ENCODE measurements at regions of chr11 and their contacts with region 1.

Region 1: DNA sequence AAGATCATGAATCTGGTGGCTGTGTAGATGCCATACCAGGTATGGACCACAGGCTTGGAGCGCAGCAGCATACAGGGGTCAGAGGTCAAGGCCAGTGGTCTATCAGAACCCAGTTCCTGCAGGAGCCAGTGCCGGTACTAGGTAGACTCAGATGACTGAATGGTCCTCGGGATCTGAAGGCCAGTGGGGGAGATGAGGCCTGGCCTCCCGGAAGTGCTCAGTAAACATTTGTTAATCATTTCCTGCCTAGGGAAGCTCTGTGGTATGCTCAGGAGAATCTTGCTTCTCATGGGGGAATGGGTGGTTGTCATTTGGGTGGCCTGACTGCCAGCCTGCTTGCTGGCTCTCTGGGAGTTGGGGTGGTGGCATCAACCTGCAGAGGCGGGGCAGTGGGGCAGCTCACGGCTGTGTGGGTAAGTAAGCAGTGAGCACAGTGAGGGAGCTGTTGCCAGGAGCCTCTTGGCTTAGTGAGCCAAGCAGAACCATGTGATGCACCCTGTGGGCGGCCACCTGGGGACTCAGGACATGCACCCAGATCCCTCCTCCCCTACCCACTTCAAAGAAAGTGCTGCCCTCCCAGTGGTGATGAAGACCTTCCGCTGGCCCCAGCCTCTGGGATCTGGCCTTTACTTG is 33.0 kb downstream of the PTPRJ start:
- DNase-seq: peak; percentile 54 to 76
- ATAC-seq: peak; percentile 11 to 34 (median 23)
- H3K4me3 ChIP-seq: no peak overlapping the region
- H3K4me3 Mint-ChIP-seq: peak overlapping the region; percentile 71
- H3K27ac ChIP-seq: peak overlapping the region; percentile 98
- H3K27ac Mint-ChIP-seq: peak overlapping the region; percentile 99
- H3K4me1 ChIP-seq: peaks cover 99% of the 10 kb centered on the region
- H3K4me1 Mint-ChIP-seq: peaks cover 69 to 83% of the 10 kb centered on the region in 2 donors
- H3K27me3 ChIP-seq: no peaks in the 10 kb centered on the region
- H3K27me3 Mint-ChIP-seq: no peaks in the 10 kb centered on the region
- CTCF ChIP-seq: no peak

Region 2: GRCh38 chr11:47932544-47932943 is 80.8 kb before region 1 on chr11:
- intact Hi-C with region 1: loop called (anchors 2 kb)
- DNase-seq: no peak
- ATAC-seq: no peak
- H3K4me3 ChIP-seq: no peak overlapping the region
- H3K4me3 Mint-ChIP-seq: no peak overlapping the region
- H3K27ac ChIP-seq: no peak overlapping the region
- H3K27ac Mint-ChIP-seq: no peak overlapping the region
- H3K4me1 ChIP-seq: peaks cover 7% of the 10 kb centered on the region
- H3K4me1 Mint-ChIP-seq: peaks cover 5% of the 10 kb centered on the region in 2 donors
- H3K27me3 ChIP-seq: no peaks in the 10 kb centered on the region
- H3K27me3 Mint-ChIP-seq: peaks cover 0 to 6% of the 10 kb centered on the region in 2 donors
- CTCF ChIP-seq: no peak

Region 3: DNA sequence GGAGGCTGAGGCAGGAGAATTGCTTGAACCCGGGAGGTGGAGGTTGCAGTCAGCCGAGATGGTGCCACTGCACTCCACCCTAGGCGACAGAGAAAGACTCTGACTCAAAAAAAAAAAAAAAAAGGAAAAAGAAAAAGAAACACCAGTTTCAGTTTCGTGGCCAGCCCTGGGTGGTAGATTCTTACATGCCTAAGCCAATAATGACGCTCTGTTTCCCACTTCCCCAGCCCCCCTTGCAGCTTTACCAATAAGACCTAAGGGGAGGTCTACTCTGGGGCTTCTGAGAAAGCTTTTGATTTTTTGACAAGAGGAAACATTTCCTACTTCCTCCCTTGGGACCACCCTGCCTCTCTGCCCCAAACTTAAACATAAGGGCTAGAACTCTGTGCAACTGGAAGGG is 63.0 kb before region 1 on chr11:
- intact Hi-C with region 1: loop called (anchors 5 kb)
- DNase-seq: peak; percentile 30 to 82
- ATAC-seq: peak; percentile 90 to 95 (median 93)
- H3K4me3 ChIP-seq: no peak overlapping the region
- H3K4me3 Mint-ChIP-seq: peak overlapping the region; percentile 47
- H3K27ac ChIP-seq: peak overlapping the region; percentile 62
- H3K27ac Mint-ChIP-seq: peak overlapping the region; percentile 65 to 79
- H3K4me1 ChIP-seq: peaks cover 25% of the 10 kb centered on the region
- H3K4me1 Mint-ChIP-seq: peaks cover 7 to 20% of the 10 kb centered on the region in 2 donors
- H3K27me3 ChIP-seq: no peaks in the 10 kb centered on the region
- H3K27me3 Mint-ChIP-seq: no peaks in the 10 kb centered on the region
- CTCF ChIP-seq: no peak

Region 4: DNA sequence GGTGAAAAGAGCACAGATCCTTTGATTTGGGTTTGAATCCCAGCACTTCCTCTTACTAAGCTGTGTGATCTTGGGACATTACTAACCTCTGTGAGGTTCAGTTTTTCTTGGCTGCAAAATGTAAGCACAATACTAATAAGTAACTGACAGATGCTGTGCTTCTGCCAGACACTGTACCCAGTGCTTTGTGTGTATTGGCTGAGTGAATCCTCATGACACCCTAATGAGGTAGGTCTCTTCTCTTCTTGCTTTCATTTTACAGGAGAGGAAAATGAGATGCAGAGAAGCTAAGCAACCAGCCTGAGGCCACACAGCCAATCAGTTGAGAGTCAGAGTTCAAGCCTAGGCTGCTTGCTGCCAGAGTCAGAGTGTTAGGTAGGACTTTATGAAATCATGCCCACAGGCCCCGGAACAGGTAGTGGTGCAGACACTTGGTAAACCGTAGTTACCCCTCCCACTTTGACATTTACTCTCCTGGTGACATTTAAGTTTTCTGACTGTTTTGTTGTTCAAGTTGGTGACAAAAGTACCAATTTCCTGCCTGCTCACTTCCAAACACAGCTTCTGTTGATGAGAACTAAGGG is 11.9 kb before region 1 on chr11:
- intact Hi-C with region 1: loop called (anchors 1 kb)
- DNase-seq: peak; percentile 76 to 96
- ATAC-seq: peak; percentile 85 to 96 (median 93)
- H3K4me3 ChIP-seq: no peak overlapping the region
- H3K4me3 Mint-ChIP-seq: peak overlapping the region; percentile 88
- H3K27ac ChIP-seq: peak overlapping the region; percentile 90
- H3K27ac Mint-ChIP-seq: peak overlapping the region; percentile 95 to 97
- H3K4me1 ChIP-seq: peaks cover 87% of the 10 kb centered on the region
- H3K4me1 Mint-ChIP-seq: peaks cover 73 to 81% of the 10 kb centered on the region in 2 donors
- H3K27me3 ChIP-seq: no peaks in the 10 kb centered on the region
- H3K27me3 Mint-ChIP-seq: no peaks in the 10 kb centered on the region
- CTCF ChIP-seq: no peak

Region 5: GRCh38 chr11:48055292-48056132 is 42.1 kb after region 1 on chr11:
- intact Hi-C with region 1: loop called (anchors 2 kb)
- DNase-seq: peak; percentile 50 to 81
- ATAC-seq: peak; percentile 66 to 78 (median 69)
- H3K4me3 ChIP-seq: no peak overlapping the region
- H3K4me3 Mint-ChIP-seq: peak overlapping the region; percentile 57
- H3K27ac ChIP-seq: peak overlapping the region; percentile 51
- H3K27ac Mint-ChIP-seq: peak overlapping the region; percentile 89 to 90
- H3K4me1 ChIP-seq: peaks cover 76% of the 10 kb centered on the region
- H3K4me1 Mint-ChIP-seq: peaks cover 85 to 88% of the 10 kb centered on the region in 2 donors
- H3K27me3 ChIP-seq: no peaks in the 10 kb centered on the region
- H3K27me3 Mint-ChIP-seq: no peaks in the 10 kb centered on the region
- CTCF ChIP-seq: no peak

Region 6: DNA sequence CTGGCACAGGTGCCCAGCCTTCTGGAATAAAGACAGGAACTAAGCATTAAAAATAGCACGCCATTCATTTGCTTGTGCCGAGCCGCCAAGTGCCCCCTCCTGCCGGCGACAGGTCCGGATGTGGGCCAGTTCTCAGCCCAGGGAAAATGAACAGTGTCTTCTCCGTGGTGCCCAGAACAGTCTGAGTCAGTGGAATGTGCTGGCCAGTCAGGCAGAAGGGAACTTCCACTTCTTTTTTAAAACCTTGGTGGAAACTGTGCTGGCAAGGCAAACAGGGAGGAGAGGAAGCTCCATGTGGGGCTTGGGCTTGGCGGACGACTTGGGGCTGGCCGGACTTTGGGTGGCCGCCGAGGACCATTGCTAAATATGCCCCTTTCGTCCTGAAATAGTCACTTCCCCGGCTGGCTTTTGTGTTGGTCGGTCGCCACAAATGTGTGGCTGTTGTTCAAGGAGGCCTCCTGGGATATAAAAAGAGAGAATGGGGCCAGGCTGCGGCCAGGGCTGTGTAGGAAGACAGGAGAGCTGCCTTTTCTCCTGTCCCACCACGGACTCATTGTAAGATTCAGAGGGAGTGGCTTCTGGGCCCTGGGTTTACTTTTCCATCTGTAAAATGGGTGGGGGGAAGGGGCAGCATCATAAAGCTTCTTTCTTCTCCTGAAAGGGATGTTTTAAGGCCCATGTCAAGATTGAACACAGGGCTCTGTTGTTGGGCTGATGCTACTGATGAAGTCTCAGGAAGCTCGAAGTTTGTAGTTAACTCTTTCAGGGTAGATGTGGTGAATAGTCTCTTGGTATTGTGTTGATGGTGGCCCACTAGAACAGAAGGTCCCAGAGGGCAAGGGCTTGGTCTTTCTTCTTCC is 68.0 kb after region 1 on chr11:
- intact Hi-C with region 1: loop called (anchors 2 kb)
- DNase-seq: peak; percentile 44 to 46
- ATAC-seq: peak; percentile 86 to 91 (median 90)
- H3K4me3 ChIP-seq: no peak overlapping the region
- H3K4me3 Mint-ChIP-seq: peak overlapping the region; percentile 61
- H3K27ac ChIP-seq: no peak overlapping the region
- H3K27ac Mint-ChIP-seq: peak overlapping the region; percentile 79 to 91
- H3K4me1 ChIP-seq: peaks cover 48% of the 10 kb centered on the region
- H3K4me1 Mint-ChIP-seq: peaks cover 73 to 75% of the 10 kb centered on the region in 2 donors
- H3K27me3 ChIP-seq: no peaks in the 10 kb centered on the region
- H3K27me3 Mint-ChIP-seq: no peaks in the 10 kb centered on the region
- CTCF ChIP-seq: no peak

Region 7: GRCh38 chr11:48109046-48109666 is 95.8 kb after region 1 on chr11:
- intact Hi-C with region 1: loop called (anchors 2 kb)
- DNase-seq: peak in 1 of 2 donors; percentile 65
- ATAC-seq: peak; percentile 37 to 49 (median 48)
- H3K4me3 ChIP-seq: no peak overlapping the region
- H3K4me3 Mint-ChIP-seq: peak overlapping the region; percentile 47
- H3K27ac ChIP-seq: peak overlapping the region; percentile 52
- H3K27ac Mint-ChIP-seq: peak overlapping the region; percentile 67 to 69
- H3K4me1 ChIP-seq: peaks cover 49% of the 10 kb centered on the region
- H3K4me1 Mint-ChIP-seq: peaks cover 39 to 55% of the 10 kb centered on the region in 2 donors
- H3K27me3 ChIP-seq: no peaks in the 10 kb centered on the region
- H3K27me3 Mint-ChIP-seq: no peaks in the 10 kb centered on the region
- CTCF ChIP-seq: no peak